GM12878 (cell line): ENCODE measurements at regions of chr2 and their contacts with region 1.

Region 1: GRCh38 chr2:97966518-97967215 is 29.1 kb downstream of the TMEM131 start:
- DNase-seq: no peak
- ATAC-seq: peak; percentile 74
- H3K4me3 ChIP-seq: no peak overlapping the region
- H3K27ac ChIP-seq: no peak overlapping the region
- H3K4me1 ChIP-seq: peaks cover 33% of the 10 kb centered on the region
- H3K27me3 ChIP-seq: no peaks in the 10 kb centered on the region
- CTCF ChIP-seq: no peak
- EP300 ChIP-seq: peak; percentile 63 to 75; a peak in 2 of 4 replicates
- POLR2A ChIP-seq: no peak
- RAD21 ChIP-seq: no peak

Region 2: GRCh38 chr2:97870396-97870843 is 96.2 kb before region 1 on chr2:
- CTCF ChIA-PET with region 1: interaction called, 4 read pairs
- POLR2A ChIA-PET with region 1: no interaction called
- RAD21 ChIA-PET with region 1: interaction called, 7 read pairs
- SMC1A ChIA-PET with region 1: interaction called, 11 read pairs
- in situ Hi-C with region 1: no loop called
- intact Hi-C with region 1: no loop called
- DNase-seq: peak; percentile 87
- ATAC-seq: peak; percentile 100
- H3K4me3 ChIP-seq: no peak overlapping the region
- H3K27ac ChIP-seq: peak overlapping the region; percentile 33; the same call in 1 of the 2 replicates
- H3K4me1 ChIP-seq: peaks cover 20% of the 10 kb centered on the region
- H3K27me3 ChIP-seq: no peaks in the 10 kb centered on the region
- CTCF ChIP-seq: peak in 2 of 3 experiments; percentile 13 to 66; a peak in 3 of 6 replicates
- EP300 ChIP-seq: peak in 1 of 2 experiments; percentile 41; a peak in 1 of 4 replicates
- POLR2A ChIP-seq: no peak
- RAD21 ChIP-seq: peak; percentile 64

Region 3: GRCh38 chr2:97935719-97936161 is 30.9 kb before region 1 on chr2:
- CTCF ChIA-PET with region 1: no interaction called
- POLR2A ChIA-PET with region 1: interaction called, 3 read pairs
- RAD21 ChIA-PET with region 1: interaction called, 22 read pairs
- SMC1A ChIA-PET with region 1: interaction called, 12 read pairs
- in situ Hi-C with region 1: no loop called
- intact Hi-C with region 1: no loop called
- DNase-seq: no peak
- ATAC-seq: peak; percentile 25
- H3K4me3 ChIP-seq: peak overlapping the region; percentile 11; the same call in 1 of the 2 replicates
- H3K27ac ChIP-seq: peak overlapping the region; percentile 63
- H3K4me1 ChIP-seq: peaks cover 55% of the 10 kb centered on the region
- H3K27me3 ChIP-seq: no peaks in the 10 kb centered on the region
- CTCF ChIP-seq: no peak
- EP300 ChIP-seq: no peak
- POLR2A ChIP-seq: no peak
- RAD21 ChIP-seq: no peak

Region 4: DNA sequence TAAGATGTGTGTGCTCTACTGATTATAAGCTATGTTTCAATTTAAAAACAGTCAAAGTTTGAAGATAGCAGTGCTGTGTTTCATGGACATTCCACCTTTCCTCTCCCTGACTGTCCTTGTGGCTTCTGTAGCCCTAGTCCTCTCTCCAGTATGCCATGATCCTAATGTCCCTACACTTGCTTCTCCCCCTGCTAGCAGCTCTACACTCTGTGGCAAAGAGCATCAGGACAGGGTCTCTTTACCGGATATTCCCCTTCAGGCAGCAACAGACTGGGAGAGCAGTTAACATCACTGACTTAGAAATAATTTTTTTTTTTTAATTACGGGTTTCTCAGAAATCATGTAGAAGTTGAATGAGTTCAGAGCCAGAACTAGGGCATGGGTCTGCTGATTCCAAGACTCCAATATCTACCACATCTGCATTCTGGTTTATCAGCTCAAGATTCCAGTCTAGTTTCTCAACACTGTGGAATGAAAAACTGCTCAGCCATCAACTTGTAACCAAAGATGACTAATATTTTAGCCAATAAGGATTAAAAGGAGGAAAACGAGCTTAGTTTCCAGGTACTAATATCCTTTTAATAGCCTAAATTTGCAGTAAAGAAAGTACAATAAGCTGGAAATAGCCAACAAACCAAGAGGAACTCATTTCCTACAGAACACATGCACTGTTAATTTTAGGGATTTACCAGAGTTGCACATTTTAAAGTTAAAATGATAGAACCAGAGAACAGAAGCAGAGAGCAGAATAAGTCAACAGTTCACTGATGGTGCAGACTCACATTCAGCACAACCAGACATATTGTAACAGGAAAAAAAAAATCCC is 16.1 kb before region 1 on chr2:
- CTCF ChIA-PET with region 1: interaction called, 4 read pairs
- POLR2A ChIA-PET with region 1: interaction called, 5 read pairs
- RAD21 ChIA-PET with region 1: interaction called, 9 read pairs
- SMC1A ChIA-PET with region 1: interaction called, 35 read pairs
- in situ Hi-C with region 1: no loop called
- intact Hi-C with region 1: no loop called
- DNase-seq: no peak
- ATAC-seq: no peak
- H3K4me3 ChIP-seq: no peak overlapping the region
- H3K27ac ChIP-seq: no peak overlapping the region
- H3K4me1 ChIP-seq: peaks cover 38% of the 10 kb centered on the region
- H3K27me3 ChIP-seq: no peaks in the 10 kb centered on the region
- CTCF ChIP-seq: no peak
- EP300 ChIP-seq: no peak
- POLR2A ChIP-seq: no peak
- RAD21 ChIP-seq: no peak

Region 5: GRCh38 chr2:98026927-98027522 is 60.4 kb after region 1 on chr2:
- CTCF ChIA-PET with region 1: interaction called, 6 read pairs
- POLR2A ChIA-PET with region 1: no interaction called
- RAD21 ChIA-PET with region 1: interaction called, 6 read pairs
- SMC1A ChIA-PET with region 1: interaction called, 14 read pairs
- in situ Hi-C with region 1: no loop called
- intact Hi-C with region 1: loop called (anchors 2 kb)
- DNase-seq: peak; percentile 98
- ATAC-seq: peak; percentile 93
- H3K4me3 ChIP-seq: peak overlapping the region; percentile 53
- H3K27ac ChIP-seq: peak overlapping the region; percentile 80
- H3K4me1 ChIP-seq: peaks cover 35% of the 10 kb centered on the region
- H3K27me3 ChIP-seq: no peaks in the 10 kb centered on the region
- CTCF ChIP-seq: no peak
- EP300 ChIP-seq: peak; percentile 87 to 93
- POLR2A ChIP-seq: no peak
- RAD21 ChIP-seq: no peak

Region 6: GRCh38 chr2:98050070-98050469 is 83.4 kb after region 1 on chr2:
- CTCF ChIA-PET with region 1: no interaction called
- POLR2A ChIA-PET with region 1: no interaction called
- RAD21 ChIA-PET with region 1: no interaction called
- SMC1A ChIA-PET with region 1: no interaction called
- in situ Hi-C with region 1: no loop called
- intact Hi-C with region 1: no loop called
- DNase-seq: no peak
- ATAC-seq: no peak
- H3K4me3 ChIP-seq: no peak overlapping the region
- H3K27ac ChIP-seq: no peak overlapping the region
- H3K4me1 ChIP-seq: no peaks in the 10 kb centered on the region
- H3K27me3 ChIP-seq: no peaks in the 10 kb centered on the region
- CTCF ChIP-seq: no peak
- EP300 ChIP-seq: no peak
- POLR2A ChIP-seq: no peak
- RAD21 ChIP-seq: no peak

Region 7: GRCh38 chr2:98086491-98087446 is 120.1 kb after region 1 on chr2 and contains the start of gene VWA3B:
- CTCF ChIA-PET with region 1: no interaction called
- POLR2A ChIA-PET with region 1: no interaction called
- RAD21 ChIA-PET with region 1: no interaction called
- SMC1A ChIA-PET with region 1: interaction called, 3 read pairs
- in situ Hi-C with region 1: no loop called
- intact Hi-C with region 1: loop called (anchors 10 kb)
- DNase-seq: no peak
- ATAC-seq: peak; percentile 96
- H3K4me3 ChIP-seq: peak within 1 kb of the TSS; percentile 82
- H3K27ac ChIP-seq: no peak within 1 kb of the TSS
- H3K4me1 ChIP-seq: peaks cover 13% of the 10 kb centered on the region
- H3K27me3 ChIP-seq: no peaks in the 10 kb centered on the region
- CTCF ChIP-seq: no peak
- EP300 ChIP-seq: no peak
- POLR2A ChIP-seq: no peak
- RAD21 ChIP-seq: no peak
- polyA plus RNA-seq, gene VWA3B: not detected

Region 8: GRCh38 chr2:98419977-98420725 is 453.5 kb after region 1 on chr2:
- CTCF ChIA-PET with region 1: no interaction called
- POLR2A ChIA-PET with region 1: no interaction called
- RAD21 ChIA-PET with region 1: no interaction called
- SMC1A ChIA-PET with region 1: no interaction called
- in situ Hi-C with region 1: no loop called
- intact Hi-C with region 1: no loop called
- DNase-seq: no peak
- ATAC-seq: no peak
- H3K4me3 ChIP-seq: no peak overlapping the region
- H3K27ac ChIP-seq: no peak overlapping the region
- H3K4me1 ChIP-seq: no peaks in the 10 kb centered on the region
- H3K27me3 ChIP-seq: no peaks in the 10 kb centered on the region
- CTCF ChIP-seq: no peak
- EP300 ChIP-seq: no peak
- POLR2A ChIP-seq: no peak
- RAD21 ChIP-seq: no peak